Pancreas (tissue), 10 donors: ENCODE measurements at regions of chr20 and their contacts with region 1.

Region 1: GRCh38 chr20:31723319-31724078 is 831 bp upstream of the BCL2L1 start:
- DNase-seq: peak; percentile 95 to 98 (median 98)
- ATAC-seq: peak; percentile 89 to 96 (median 92)
- H3K4me3 ChIP-seq: peak overlapping the region; percentile 89 to 96 (median 94)
- H3K27ac ChIP-seq: peak overlapping the region; percentile 97 to 98 (median 98)
- H3K4me1 ChIP-seq: peaks cover 0 to 25% (median 16%) of the 10 kb centered on the region in 3 donors
- H3K27me3 ChIP-seq: no peaks in the 10 kb centered on the region
- CTCF ChIP-seq: peak; percentile 78 to 91 (median 83)

Region 2: DNA sequence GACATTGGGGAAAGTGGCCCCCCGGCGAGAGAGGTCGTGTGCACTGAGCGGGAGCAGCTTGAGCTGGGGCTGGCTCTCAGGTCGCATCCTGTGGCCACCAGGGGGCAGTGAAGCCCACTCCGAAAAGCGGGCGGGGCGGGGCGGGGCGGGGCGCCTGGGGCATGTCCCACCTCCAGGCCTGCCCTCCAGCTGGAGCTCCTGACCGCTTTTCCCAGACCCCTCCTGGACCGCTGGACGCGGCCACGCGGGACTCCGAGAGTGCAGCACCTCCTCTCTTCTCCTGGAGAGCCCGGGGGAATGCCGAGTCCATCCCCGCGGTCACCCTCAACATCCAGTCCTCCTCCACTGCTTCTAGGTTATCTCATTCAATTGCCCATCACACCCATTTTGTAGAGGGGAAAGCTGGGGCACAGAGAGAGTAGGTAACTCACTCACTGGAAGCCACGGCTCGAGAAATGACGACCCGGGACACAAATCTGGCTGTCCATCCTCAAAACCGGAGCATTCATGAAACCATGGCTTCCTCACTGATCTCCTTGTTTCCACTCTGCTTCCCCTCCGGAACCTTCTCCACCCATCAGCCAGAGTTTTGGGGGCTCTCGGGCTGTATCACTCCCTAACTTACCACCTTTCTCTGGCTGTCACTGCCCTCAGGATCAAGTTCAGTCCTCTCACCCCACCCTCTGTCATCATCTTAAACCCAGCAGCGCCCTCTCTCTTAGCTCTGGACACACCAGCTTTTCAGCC is 61.7 kb before region 1 on chr20:
- intact Hi-C with region 1: loop called in 2 of 3 experiments (anchors 2 to 5 kb)
- DNase-seq: peak; percentile 67 to 96 (median 86)
- ATAC-seq: peak; percentile 76 to 90 (median 84)
- H3K4me3 ChIP-seq: peak overlapping the region in 2 of 4 donors; percentile 22 to 32
- H3K27ac ChIP-seq: peak overlapping the region in 3 of 4 donors; percentile 24 to 63 (median 62)
- H3K4me1 ChIP-seq: peaks cover 18 to 26% (median 26%) of the 10 kb centered on the region in 3 donors
- H3K27me3 ChIP-seq: no peaks in the 10 kb centered on the region
- CTCF ChIP-seq: peak; percentile 76 to 85 (median 82)

Region 3: DNA sequence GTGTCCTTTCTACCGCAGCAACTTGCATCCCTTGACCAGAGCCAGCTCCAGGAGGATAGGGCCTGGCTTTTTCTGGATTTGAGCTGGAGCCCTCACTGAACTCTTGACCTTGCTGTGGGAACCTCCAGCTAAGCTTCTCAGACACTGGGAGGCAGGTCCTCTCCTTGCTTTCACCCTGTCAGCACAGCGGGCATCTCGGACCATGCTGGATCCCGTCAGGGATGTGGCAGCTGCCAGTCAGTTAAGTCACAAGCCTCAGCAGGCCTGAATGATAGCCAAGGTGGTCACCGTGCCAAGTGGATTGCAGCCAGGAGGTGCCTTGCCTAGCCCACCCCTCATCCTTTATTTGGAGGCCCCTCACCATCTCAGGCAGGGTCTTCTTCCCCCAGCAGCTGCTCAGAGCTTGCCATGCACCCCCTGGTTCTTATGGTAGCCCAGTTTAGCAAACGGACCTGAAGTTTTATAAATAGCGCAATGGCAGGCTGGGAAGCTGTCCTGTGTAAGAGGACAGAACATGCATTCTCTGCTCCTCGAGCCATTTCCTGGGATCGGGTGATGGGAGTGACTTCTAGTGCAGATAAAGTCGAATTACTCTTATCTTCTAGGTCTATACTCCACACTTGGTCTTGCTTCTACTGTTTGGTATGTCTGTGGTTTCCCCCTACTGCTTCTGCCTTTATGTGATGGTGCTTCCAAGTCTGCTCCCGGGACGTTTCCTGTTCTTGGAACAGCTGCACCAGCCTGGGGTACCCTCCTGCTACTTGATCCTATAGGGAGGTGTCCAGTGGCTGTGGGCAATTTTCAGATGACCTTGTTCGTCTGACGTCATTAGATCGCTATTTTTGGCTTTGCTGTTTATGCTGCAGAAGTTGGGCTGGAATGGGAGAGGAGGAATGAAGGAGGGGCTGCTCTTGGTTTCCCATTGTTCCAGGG is 88.6 kb after region 1 on chr20:
- intact Hi-C with region 1: no loop called
- DNase-seq: peak in 2 of 6 donors; percentile 26 to 45
- ATAC-seq: peak; percentile 41 to 83 (median 78)
- H3K4me3 ChIP-seq: no peak overlapping the region
- H3K27ac ChIP-seq: no peak overlapping the region
- H3K4me1 ChIP-seq: peaks cover 0 to 9% (median 9%) of the 10 kb centered on the region in 3 donors
- H3K27me3 ChIP-seq: no peaks in the 10 kb centered on the region
- CTCF ChIP-seq: no peak

Region 4: GRCh38 chr20:31956556-31957526 is 233.3 kb after region 1 on chr20:
- intact Hi-C with region 1: no loop called
- DNase-seq: no peak
- ATAC-seq: no peak
- H3K4me3 ChIP-seq: no peak overlapping the region
- H3K27ac ChIP-seq: no peak overlapping the region
- H3K4me1 ChIP-seq: no peaks in the 10 kb centered on the region
- H3K27me3 ChIP-seq: no peaks in the 10 kb centered on the region
- CTCF ChIP-seq: no peak